ENCODE measurements at regions of chr1 and their contacts with region 1.

Region 1: DNA sequence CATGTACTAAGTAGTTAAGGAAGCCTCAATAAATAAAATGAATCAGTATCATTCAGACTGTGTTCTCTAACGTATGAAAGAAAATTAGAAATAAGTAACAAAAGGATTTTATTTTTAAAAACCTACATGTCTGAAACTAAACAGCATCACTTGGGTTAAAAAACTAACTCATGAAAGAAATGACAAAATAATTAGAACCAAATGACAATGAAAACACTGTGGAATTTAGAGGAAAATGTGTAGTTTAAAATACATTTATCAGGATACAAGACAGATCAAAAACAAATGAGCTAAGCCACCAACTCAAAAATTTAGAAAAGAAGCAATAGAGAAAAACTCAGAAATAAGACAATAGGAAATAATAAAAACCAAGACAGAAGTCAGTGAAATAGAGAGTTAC is 108.7 kb downstream of the TENT5C start:
- DNase-seq: no peak
- H3K4me3 ChIP-seq: no peak overlapping the region
- H3K4me3 Mint-ChIP-seq: no peak overlapping the region
- H3K27ac Mint-ChIP-seq: no peak overlapping the region
- H3K4me1 ChIP-seq: no peaks in the 10 kb centered on the region
- H3K4me1 Mint-ChIP-seq: no peaks in the 10 kb centered on the region
- H3K27me3 ChIP-seq: no peaks in the 10 kb centered on the region
- H3K27me3 Mint-ChIP-seq: no peaks in the 10 kb centered on the region
- CTCF ChIP-seq: no peak

Region 2: GRCh38 chr1:117534995-117535467 is 179.5 kb before region 1 on chr1:
- CTCF ChIA-PET with region 1: interaction called, 6 read pairs
- POLR2A ChIA-PET with region 1: no interaction called
- intact Hi-C with region 1: loop called (anchors 1 kb)
- DNase-seq: peak; percentile 52 to 60
- H3K4me3 ChIP-seq: no peak overlapping the region
- H3K4me3 Mint-ChIP-seq: no peak overlapping the region
- H3K27ac Mint-ChIP-seq: no peak overlapping the region
- H3K4me1 ChIP-seq: no peaks in the 10 kb centered on the region
- H3K4me1 Mint-ChIP-seq: no peaks in the 10 kb centered on the region
- H3K27me3 ChIP-seq: no peaks in the 10 kb centered on the region
- H3K27me3 Mint-ChIP-seq: no peaks in the 10 kb centered on the region
- CTCF ChIP-seq: peak; percentile 28 to 40

Measured in Caco-2 (cell line).